ENCODE measurements at regions of chr18 and their contacts with region 1.

Region 1: DNA sequence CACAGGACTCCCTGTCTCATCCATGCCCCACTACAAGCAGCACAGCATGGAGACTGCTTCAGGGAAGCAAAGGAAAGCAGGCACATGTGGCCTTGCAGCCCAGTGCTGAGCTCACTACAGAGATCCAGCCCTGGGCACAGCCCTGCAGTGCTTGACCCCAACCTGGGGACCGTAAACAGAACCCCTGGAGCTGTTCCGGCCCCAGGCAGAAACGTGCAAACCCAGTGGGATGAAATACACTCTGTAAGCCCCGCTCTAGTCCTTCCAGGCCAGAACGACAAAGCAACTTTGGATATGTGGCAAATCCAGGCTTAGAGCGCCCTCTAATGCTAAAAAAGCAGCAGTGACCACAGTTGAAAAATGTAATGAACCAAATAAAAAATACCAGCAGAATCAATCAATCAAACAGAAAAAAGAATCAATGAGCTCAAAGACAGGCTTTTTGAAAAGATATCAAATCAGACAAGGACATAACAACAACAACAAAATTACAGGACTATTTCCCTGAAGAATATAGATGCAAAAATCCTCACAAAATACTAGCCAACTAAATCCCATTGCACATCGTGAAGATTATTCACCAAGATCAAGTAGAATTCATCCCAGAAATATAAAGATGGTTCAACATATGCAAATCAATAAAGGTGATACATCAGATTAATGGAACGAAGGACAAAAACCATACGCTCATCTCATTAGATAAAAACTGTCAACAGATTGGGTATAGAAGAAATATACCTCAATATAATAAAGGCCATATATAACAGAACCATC is 45.6 kb downstream of the ZNF519 start:
- DNase-seq: peak; percentile 4
- H3K4me3 ChIP-seq: no peak overlapping the region
- H3K27ac ChIP-seq: no peak overlapping the region
- H3K4me1 ChIP-seq: no peaks in the 10 kb centered on the region
- H3K27me3 ChIP-seq: no peaks in the 10 kb centered on the region
- CTCF ChIP-seq: peak; percentile 60 to 69

Region 2: DNA sequence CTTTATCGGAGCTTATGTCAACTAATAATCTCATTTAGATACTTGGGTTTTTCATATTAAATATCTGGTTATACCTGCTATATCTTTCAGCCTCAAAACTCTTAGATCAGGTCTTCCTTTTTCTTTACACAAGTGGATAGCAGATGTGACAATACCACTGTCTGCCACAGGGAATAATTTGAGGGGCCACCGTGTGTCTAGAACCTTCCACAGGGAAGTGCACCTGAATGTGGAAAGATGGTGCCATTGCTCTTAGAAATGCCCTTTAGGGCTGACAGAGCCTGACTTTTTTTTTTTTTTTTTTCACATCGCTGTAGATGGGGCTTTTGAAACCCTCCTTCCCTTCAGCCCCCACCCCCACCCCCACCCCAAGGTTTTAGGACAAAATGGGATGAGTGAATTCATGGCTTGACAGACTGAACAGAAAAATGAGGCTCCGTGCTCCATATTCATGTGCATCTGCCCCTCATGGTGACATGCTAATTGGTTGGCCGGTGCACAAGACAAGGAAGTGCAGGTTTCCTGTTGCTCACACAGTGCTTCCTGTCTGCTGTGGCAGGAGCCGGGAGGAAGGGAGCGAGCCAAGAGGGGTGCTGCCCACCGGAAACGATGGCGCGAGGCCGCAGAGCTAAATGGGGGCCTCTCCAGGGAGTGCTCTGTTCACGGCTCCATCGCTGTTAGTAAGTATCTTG is 622.1 kb before region 1 on chr18:
- CTCF ChIA-PET with region 1: no interaction called
- dilution Hi-C with region 1: no loop called
- in situ Hi-C with region 1: no loop called
- intact Hi-C with region 1: no loop called
- DNase-seq: no peak
- H3K4me3 ChIP-seq: no peak overlapping the region
- H3K27ac ChIP-seq: no peak overlapping the region
- H3K4me1 ChIP-seq: no peaks in the 10 kb centered on the region
- H3K27me3 ChIP-seq: no peaks in the 10 kb centered on the region
- CTCF ChIP-seq: no peak

Region 3: DNA sequence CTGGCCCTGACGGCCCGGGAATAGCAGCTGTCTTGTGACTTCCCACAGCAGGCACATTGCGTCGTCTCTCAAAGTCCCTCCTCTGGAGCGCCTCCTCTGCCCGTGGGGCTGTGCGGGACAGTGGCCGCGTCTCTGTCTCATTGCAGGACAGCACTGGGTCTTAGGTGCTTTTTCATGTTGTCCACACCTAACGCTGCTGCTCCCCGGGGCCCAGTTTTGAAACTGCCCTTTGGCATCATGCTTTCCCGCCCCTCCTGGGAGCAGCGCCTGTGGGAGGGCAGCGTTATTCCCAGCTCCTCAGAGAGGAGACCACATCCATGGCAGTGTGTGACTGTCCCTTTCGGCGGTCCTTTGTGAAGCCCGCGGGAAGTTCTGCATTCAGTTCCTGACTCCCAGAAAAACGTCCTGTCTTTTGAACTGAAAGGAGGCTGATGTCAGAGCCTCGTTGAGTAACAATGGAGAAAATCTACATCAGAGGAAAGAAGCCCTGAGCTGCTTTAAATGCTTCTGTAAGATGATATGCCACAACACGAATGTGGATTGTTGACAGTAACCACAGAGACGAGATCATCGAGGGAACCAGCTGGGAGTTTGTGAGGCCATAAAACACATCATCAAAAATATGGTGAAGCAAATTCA is 586.3 kb before region 1 on chr18:
- CTCF ChIA-PET with region 1: no interaction called
- dilution Hi-C with region 1: no loop called
- in situ Hi-C with region 1: no loop called
- intact Hi-C with region 1: no loop called
- DNase-seq: peak; percentile 66
- H3K4me3 ChIP-seq: no peak overlapping the region
- H3K27ac ChIP-seq: no peak overlapping the region
- H3K4me1 ChIP-seq: no peaks in the 10 kb centered on the region
- H3K27me3 ChIP-seq: peaks cover 5% of the 10 kb centered on the region
- CTCF ChIP-seq: no peak

Region 4: GRCh38 chr18:13558124-13558523 is 528.5 kb before region 1 on chr18:
- CTCF ChIA-PET with region 1: no interaction called
- dilution Hi-C with region 1: no loop called
- in situ Hi-C with region 1: no loop called
- intact Hi-C with region 1: loop called (anchors 10 kb)
- DNase-seq: peak; percentile 29
- H3K4me3 ChIP-seq: no peak overlapping the region
- H3K27ac ChIP-seq: no peak overlapping the region
- H3K4me1 ChIP-seq: no peaks in the 10 kb centered on the region
- H3K27me3 ChIP-seq: no peaks in the 10 kb centered on the region
- CTCF ChIP-seq: peak; percentile 67 to 70

Region 5: DNA sequence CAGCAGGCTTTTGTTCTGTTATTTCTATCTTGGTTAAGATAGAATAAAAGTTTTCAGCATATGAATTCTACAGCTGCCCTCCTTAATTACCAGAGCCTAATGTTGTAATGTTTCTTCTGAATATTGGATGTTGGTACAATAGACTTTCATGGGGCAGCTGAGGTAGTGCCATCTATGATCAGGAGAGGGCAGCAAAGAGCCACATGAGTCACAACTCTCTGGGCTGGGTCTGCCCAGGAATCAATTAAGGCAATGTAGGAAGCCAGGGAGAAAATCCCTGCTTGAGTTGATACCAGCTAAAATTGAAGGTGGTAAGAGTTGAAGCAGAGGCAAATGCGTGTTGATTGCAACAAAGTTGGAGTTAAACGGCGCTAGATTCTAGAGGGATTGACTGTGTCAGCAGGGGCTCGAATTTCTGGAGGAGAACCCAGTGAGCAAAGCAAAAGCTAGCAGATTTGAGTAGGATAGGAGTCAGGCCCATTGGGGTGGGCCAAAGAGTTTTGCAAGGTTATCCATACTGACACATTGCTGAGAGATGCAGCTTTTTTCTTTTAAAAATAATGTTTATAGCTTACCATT is 273.3 kb before region 1 on chr18:
- CTCF ChIA-PET with region 1: interaction called, 3 read pairs
- dilution Hi-C with region 1: no loop called
- in situ Hi-C with region 1: no loop called
- intact Hi-C with region 1: loop called (anchors 5 kb)
- DNase-seq: peak; percentile 44
- H3K4me3 ChIP-seq: no peak overlapping the region
- H3K27ac ChIP-seq: no peak overlapping the region
- H3K4me1 ChIP-seq: peaks cover 5% of the 10 kb centered on the region
- H3K27me3 ChIP-seq: no peaks in the 10 kb centered on the region
- CTCF ChIP-seq: peak; percentile 85 to 91

Region 6: GRCh38 chr18:13823707-13824395 is 262.8 kb before region 1 on chr18 and contains the start of gene MC5R:
- CTCF ChIA-PET with region 1: interaction called, 4 read pairs
- dilution Hi-C with region 1: no loop called
- in situ Hi-C with region 1: loop called in 1 of 2 experiments (anchors 10 kb)
- intact Hi-C with region 1: no loop called
- DNase-seq: peak; percentile 12
- H3K4me3 ChIP-seq: peak within 1 kb of the TSS; percentile 27 to 38 (median 37)
- H3K27ac ChIP-seq: no peak within 1 kb of the TSS
- H3K4me1 ChIP-seq: no peaks in the 10 kb centered on the region
- H3K27me3 ChIP-seq: peaks cover 3% of the 10 kb centered on the region
- CTCF ChIP-seq: peak; percentile 83 to 89
- total RNA-seq, gene MC5R: not detected

Region 7: GRCh38 chr18:13831864-13832508 is 254.7 kb before region 1 on chr18:
- CTCF ChIA-PET with region 1: no interaction called
- dilution Hi-C with region 1: no loop called
- in situ Hi-C with region 1: loop called in 1 of 2 experiments (anchors 10 kb)
- intact Hi-C with region 1: loop called (anchors 1 kb)
- DNase-seq: no peak
- H3K4me3 ChIP-seq: no peak overlapping the region
- H3K27ac ChIP-seq: no peak overlapping the region
- H3K4me1 ChIP-seq: no peaks in the 10 kb centered on the region
- H3K27me3 ChIP-seq: no peaks in the 10 kb centered on the region
- CTCF ChIP-seq: no peak

Measured in mammary epithelial cell (primary cell).